OCI-LY7 (cell line): ENCODE measurements at regions of chr1 and their contacts with region 1.

Region 1: GRCh38 chr1:226083302-226084101 is 21.0 kb downstream of the H3-3A start:
- DNase-seq: peak; percentile 92
- H3K4me3 ChIP-seq: peak overlapping the region; percentile 70
- H3K27ac ChIP-seq: peak overlapping the region; percentile 49
- H3K4me1 ChIP-seq: peaks cover 33% of the 10 kb centered on the region
- CTCF ChIP-seq: no peak; the same call in 1 of the 2 replicates

Region 2: DNA sequence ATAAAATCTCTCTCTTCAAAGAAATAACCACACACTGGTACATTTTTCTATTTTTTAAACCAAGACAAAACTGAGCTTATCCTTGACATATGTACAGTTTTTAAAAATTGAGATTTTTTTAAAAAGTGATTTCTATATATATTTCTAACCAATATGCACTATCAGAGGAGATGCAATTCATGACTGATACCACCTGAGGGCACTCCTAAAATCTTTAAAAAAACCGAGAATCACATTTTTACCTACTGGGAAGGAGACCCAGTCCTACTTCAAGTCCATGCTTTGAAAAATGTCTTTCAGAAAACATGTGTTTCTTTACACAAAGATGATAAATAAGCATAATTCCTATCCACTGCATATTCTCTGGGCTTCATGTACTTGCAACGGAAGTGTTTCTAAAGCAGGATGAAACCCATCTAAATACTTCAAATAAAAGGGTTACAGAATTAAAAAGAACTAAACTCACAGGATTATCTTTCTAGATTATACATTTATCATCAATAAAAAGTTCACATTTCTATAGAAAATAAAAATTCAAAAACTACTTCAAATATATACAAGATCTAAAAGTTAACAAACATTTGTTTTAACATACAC is 529.2 kb before region 1 on chr1:
- CTCF ChIA-PET with region 1: no interaction called
- POLR2A ChIA-PET with region 1: no interaction called
- intact Hi-C with region 1: no loop called
- DNase-seq: peak; percentile 56
- H3K4me3 ChIP-seq: no peak overlapping the region
- H3K27ac ChIP-seq: no peak overlapping the region
- H3K4me1 ChIP-seq: no peaks in the 10 kb centered on the region
- CTCF ChIP-seq: peak; percentile 94

Region 3: DNA sequence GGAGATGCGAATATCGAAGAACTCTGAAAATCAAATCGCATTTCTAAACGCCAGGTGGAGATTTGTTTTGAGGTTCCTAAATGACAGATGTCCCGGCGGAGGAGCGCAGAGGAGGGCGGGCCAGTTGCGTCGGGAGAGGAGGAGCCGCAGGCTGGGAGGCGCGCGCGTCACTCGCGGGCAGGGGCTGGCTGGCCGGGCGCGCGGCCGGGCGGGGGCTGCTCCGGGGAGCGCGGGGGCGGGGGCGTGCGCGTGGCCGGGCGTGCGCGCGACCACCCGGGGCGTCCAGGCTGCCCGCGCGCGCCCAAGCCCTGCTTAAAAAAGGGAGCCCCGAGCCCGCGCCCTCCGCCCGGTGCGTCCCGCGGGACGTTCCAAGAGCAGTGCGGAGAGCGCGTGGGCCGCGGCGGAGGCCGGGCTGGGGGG is 26.3 kb after region 1 on chr1:
- CTCF ChIA-PET with region 1: no interaction called
- POLR2A ChIA-PET with region 1: interaction called, 7 read pairs
- intact Hi-C with region 1: loop called (anchors 1 kb)
- DNase-seq: peak; percentile 72
- H3K4me3 ChIP-seq: peak overlapping the region; percentile 73
- H3K27ac ChIP-seq: peak overlapping the region; percentile 80
- H3K4me1 ChIP-seq: peaks cover 41% of the 10 kb centered on the region
- CTCF ChIP-seq: no peak